Panc1 (cell line): ENCODE measurements at regions of chr11 and their contacts with region 1.

Region 1: DNA sequence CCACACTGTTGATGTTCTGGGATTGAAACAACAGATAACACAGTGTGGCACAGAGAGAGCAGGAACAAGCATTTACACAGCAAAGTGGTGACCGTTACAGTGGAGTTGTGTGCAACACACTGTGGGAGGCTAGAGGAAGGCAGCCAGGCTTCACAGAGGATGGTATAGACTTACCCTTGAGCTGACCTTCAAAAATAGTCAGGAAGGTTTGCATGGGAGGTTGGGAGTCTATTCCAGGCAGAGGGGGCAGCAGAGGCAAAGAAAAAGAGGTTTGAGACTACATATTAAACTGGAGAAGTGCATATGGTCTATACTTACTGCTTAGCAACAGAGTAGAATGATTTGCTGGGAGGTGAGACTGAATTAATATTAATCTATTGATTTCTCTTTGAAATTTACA is 22.1 kb upstream of the FOLH1 start:
- DNase-seq: no peak
- ATAC-seq: no peak
- H3K4me3 ChIP-seq: no peak overlapping the region
- H3K27ac ChIP-seq: no peak overlapping the region
- H3K4me1 ChIP-seq: no peaks in the 10 kb centered on the region
- H3K27me3 ChIP-seq: no peaks in the 10 kb centered on the region
- CTCF ChIP-seq: no peak; the same call in 1 of the 2 replicates

Region 2: DNA sequence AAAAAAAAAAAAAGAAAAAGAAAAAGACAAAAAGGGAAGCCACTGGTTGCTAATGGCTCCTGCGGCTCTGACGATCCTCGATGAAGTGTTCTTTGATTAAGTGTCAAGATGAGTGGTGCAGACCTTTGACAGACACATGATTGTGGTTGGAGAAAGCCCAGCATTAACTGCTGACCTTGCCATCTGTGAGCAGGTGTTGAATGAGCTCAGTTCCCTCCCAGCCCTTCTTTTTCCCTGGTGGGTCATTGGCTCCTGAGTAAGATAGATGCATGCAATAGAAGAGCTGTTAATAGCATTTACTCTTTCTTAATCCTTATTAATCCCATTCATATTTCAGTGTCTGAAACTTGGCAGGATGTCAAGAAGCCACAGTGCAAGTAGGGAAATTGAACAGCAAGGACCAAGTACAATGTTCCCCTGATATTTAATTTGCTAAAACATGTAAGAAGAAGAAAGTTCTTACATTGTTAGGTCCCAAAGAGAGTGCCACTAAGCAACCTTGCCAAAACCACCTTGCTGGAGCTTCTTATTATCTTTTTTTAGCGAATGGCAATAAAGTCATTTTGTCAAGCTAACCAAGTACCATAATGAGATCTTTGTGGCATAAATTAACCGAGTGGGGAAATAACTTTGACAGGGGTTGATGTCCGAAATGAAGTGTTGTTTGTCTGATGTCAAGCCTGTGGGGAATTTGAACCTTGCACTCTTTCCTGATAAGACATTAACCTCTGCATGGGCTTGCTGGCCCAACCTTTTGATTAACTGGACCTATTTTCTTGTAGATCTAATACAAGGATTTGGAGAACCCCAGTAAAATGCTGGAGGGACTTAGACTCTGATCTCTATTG is 1136.5 kb before region 1 on chr11:
- CTCF ChIA-PET with region 1: no interaction called
- POLR2A ChIA-PET with region 1: no interaction called
- in situ Hi-C with region 1: no loop called
- intact Hi-C with region 1: no loop called
- DNase-seq: no peak
- ATAC-seq: no peak
- H3K4me3 ChIP-seq: no peak overlapping the region
- H3K27ac ChIP-seq: no peak overlapping the region
- H3K4me1 ChIP-seq: peaks cover 39% of the 10 kb centered on the region
- H3K27me3 ChIP-seq: no peaks in the 10 kb centered on the region
- CTCF ChIP-seq: no peak

Region 3: DNA sequence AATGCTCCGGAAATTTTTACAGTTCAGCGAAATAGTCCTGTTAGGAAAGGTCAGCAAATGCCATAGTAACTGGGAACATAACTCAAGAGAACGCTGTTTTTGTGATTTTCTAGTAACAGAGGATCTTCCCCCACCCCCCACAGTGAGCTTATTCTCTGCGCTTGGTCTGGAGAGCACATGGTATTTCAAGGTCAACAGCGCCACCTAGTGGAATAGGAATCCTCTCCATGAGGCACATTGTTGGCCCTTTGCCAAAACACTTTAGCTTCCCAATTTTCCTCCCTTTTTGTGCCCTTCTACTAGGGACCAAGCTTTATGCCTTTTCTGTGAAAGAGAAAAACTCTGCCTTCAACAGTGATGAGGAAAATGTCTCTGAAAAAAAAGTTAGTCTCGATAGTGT is 765.1 kb after region 1 on chr11:
- CTCF ChIA-PET with region 1: no interaction called
- POLR2A ChIA-PET with region 1: no interaction called
- in situ Hi-C with region 1: no loop called
- intact Hi-C with region 1: loop called (anchors 5 kb)
- DNase-seq: peak; percentile 8
- ATAC-seq: no peak
- H3K4me3 ChIP-seq: no peak overlapping the region
- H3K27ac ChIP-seq: no peak overlapping the region
- H3K4me1 ChIP-seq: no peaks in the 10 kb centered on the region
- H3K27me3 ChIP-seq: no peaks in the 10 kb centered on the region
- CTCF ChIP-seq: peak; percentile 63